Dendritic cell treated with granulocyte-macrophage colony-stimulating factor and Interleukin-4, amounts not matched to agents 40 ng/mL and 50 ng/mL, for 4 days (primary cell): ENCODE measurements at regions of chr13 and their contacts with region 1.

Region 1: GRCh38 chr13:52665325-52665724 is 12.7 kb downstream of the SUGT1 start:
- H3K4me3 Mint-ChIP-seq: no peak overlapping the region
- H3K27ac Mint-ChIP-seq: no peak overlapping the region
- H3K4me1 Mint-ChIP-seq: no peaks in the 10 kb centered on the region
- H3K27me3 Mint-ChIP-seq: no peaks in the 10 kb centered on the region

Region 2: GRCh38 chr13:52738719-52739467 is 73.6 kb after region 1 on chr13:
- intact Hi-C with region 1: loop called (anchors 2 kb)
- H3K4me3 Mint-ChIP-seq: peak overlapping the region; percentile 53
- H3K27ac Mint-ChIP-seq: no peak overlapping the region
- H3K4me1 Mint-ChIP-seq: peaks cover 10% of the 10 kb centered on the region
- H3K27me3 Mint-ChIP-seq: peaks cover 46% of the 10 kb centered on the region

Region 3: GRCh38 chr13:52809310-52809769 is 144.0 kb after region 1 on chr13:
- intact Hi-C with region 1: loop called (anchors 5 kb)
- H3K4me3 Mint-ChIP-seq: no peak overlapping the region
- H3K27ac Mint-ChIP-seq: no peak overlapping the region
- H3K4me1 Mint-ChIP-seq: no peaks in the 10 kb centered on the region
- H3K27me3 Mint-ChIP-seq: peaks cover 13% of the 10 kb centered on the region